Body of pancreas (tissue), 4 donors: ENCODE measurements at regions of chr6 and their contacts with region 1.

Region 1: GRCh38 chr6:154638369-154638768 is 94.8 kb upstream of the SCAF8 start:
- DNase-seq: no peak
- ATAC-seq: no peak
- H3K4me3 ChIP-seq: no peak overlapping the region
- H3K27ac ChIP-seq: no peak overlapping the region
- H3K4me1 ChIP-seq: no peaks in the 10 kb centered on the region
- H3K27me3 ChIP-seq: no peaks in the 10 kb centered on the region
- CTCF ChIP-seq: no peak
- POLR2A ChIP-seq: no peak

Region 2: GRCh38 chr6:154580401-154581135 is 57.8 kb before region 1 on chr6:
- intact Hi-C with region 1: loop called (anchors 10 kb)
- DNase-seq: no peak
- ATAC-seq: no peak
- H3K4me3 ChIP-seq: no peak overlapping the region
- H3K27ac ChIP-seq: no peak overlapping the region
- H3K4me1 ChIP-seq: no peaks in the 10 kb centered on the region
- H3K27me3 ChIP-seq: no peaks in the 10 kb centered on the region
- CTCF ChIP-seq: no peak
- POLR2A ChIP-seq: no peak

Region 3: DNA sequence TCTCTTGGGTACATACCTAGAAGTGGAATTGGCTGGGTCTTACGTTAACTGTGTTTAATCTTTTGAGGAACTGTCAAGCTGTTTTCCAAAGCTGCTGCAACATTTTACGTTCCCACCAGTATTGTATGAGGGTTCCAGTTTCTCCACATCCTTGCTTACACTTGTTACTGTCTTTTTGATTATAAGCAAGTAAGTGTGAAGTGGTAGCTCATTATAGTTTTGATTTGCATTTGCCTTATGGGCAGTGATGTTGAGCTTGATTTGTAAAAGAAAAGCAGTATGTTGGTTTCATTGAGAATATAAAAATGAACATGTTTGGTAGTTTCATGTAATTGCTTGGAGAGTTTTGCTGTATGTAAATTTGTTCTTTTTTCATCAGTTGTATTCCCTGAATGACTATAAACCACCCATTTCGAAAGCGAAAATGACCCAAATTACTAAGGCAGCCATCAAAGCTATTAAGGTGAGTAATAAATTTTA is 135.3 kb after region 1 on chr6:
- intact Hi-C with region 1: no loop called
- DNase-seq: no peak
- ATAC-seq: no peak
- H3K4me3 ChIP-seq: no peak overlapping the region
- H3K27ac ChIP-seq: no peak overlapping the region
- H3K4me1 ChIP-seq: peaks cover 13% of the 10 kb centered on the region
- H3K27me3 ChIP-seq: no peaks in the 10 kb centered on the region
- CTCF ChIP-seq: no peak
- POLR2A ChIP-seq: no peak